Activated T-helper 1 cell treated with anti-CD3 and anti-CD28 coated beads, Interleukin-12 subunit alpha, Interleukin-12 subunit beta, Interleukin-2, Interleukin-4 antibody, amounts not matched to agents 30 ng/mL and 10 ng/mL and 1 ng/mL, durations not matched to agents 14 hours and 24 hours and 36 hours (primary cell): ENCODE measurements at regions of chr6 and their contacts with region 1.

Region 1: GRCh38 chr6:17156112-17156921 is 54.5 kb downstream of the STMND1 start:
- DNase-seq: peak; percentile 17
- H3K4me3 Mint-ChIP-seq: no peak overlapping the region
- H3K27ac Mint-ChIP-seq: no peak overlapping the region
- H3K4me1 Mint-ChIP-seq: no peaks in the 10 kb centered on the region
- H3K27me3 Mint-ChIP-seq: no peaks in the 10 kb centered on the region

Region 2: DNA sequence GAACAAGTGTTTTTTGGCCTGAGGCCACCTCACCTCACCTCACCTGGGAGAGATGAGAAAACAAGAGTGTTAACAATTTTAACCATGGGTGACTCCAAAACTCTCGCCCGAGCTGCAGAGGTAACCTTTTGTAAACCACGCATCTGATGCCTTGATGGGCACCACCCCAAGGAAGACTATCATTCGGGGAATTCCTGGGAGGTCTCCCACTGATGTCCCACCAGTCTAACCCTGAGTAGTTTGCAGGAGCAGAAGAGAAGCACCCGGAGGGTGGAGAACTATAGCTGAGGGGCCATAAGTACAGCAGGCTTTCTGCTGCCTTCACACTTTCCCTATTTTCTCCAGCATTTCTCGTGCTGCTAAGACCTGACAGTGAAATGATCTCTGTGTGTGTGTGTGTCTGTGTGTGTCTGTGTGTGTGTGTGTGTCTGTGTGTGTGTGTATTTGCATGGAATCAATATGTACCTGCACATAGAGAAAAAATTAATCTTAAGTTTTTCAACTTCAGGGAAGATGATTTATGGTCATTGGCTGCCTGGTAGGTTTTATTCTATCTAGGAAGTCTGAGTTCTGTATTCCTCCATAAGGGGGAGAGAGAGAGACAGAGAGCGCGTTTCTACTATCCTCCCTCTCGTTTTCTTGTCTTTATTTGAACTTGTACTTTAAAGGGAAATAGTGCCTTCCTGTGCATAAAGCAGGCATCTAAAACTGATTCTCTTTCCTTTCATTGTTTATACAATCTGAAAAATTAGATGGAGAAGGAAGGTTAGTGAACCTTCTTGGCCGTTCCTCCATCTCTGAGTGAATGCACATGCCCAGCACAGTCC is 312.9 kb after region 1 on chr6:
- intact Hi-C with region 1: no loop called
- DNase-seq: no peak
- H3K4me3 Mint-ChIP-seq: no peak overlapping the region
- H3K27ac Mint-ChIP-seq: no peak overlapping the region
- H3K4me1 Mint-ChIP-seq: no peaks in the 10 kb centered on the region
- H3K27me3 Mint-ChIP-seq: peaks cover 4% of the 10 kb centered on the region

Region 3: DNA sequence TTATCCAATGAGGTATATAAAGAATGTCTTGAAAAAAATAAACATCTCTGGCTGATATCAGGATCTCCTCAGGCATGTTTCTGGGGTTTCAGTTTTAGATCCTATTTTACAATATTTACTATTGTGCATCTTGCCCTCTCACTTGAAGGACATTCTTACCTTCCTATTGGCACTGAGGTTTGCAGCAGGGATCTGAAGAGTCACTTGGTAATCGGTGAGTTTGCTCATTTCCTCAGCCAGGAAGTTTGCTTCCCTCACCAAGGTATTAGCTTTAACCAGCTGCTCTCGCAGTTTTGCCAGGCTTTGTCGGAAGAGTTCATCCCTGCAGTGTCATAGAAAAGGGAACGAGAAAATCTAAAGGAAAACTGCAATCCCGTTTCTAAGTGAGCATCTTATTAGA is 652.3 kb after region 1 on chr6:
- intact Hi-C with region 1: loop called (anchors 1 kb)
- DNase-seq: no peak
- H3K4me3 Mint-ChIP-seq: no peak overlapping the region
- H3K27ac Mint-ChIP-seq: no peak overlapping the region
- H3K4me1 Mint-ChIP-seq: no peaks in the 10 kb centered on the region
- H3K27me3 Mint-ChIP-seq: peaks cover 10% of the 10 kb centered on the region

Region 4: GRCh38 chr6:17820055-17820454 is 663.7 kb after region 1 on chr6:
- intact Hi-C with region 1: loop called (anchors 1 kb)
- DNase-seq: no peak
- H3K4me3 Mint-ChIP-seq: no peak overlapping the region
- H3K27ac Mint-ChIP-seq: no peak overlapping the region
- H3K4me1 Mint-ChIP-seq: no peaks in the 10 kb centered on the region
- H3K27me3 Mint-ChIP-seq: peaks cover 5% of the 10 kb centered on the region